Dorsolateral prefrontal cortex (tissue), 120 donors: ENCODE measurements at regions of chr2 and their contacts with region 1.

Region 1: GRCh38 chr2:204691911-204692510 is 146.7 kb downstream of the PARD3B start:
- DNase-seq: peak in 2 of 10 donors; percentile 7 to 25
- H3K4me3 ChIP-seq: no peak overlapping the region
- H3K27ac ChIP-seq: no peak overlapping the region
- H3K27me3 ChIP-seq: no peaks in the 10 kb centered on the region
- CTCF ChIP-seq: peak; percentile 25 to 84 (median 68)

Region 2: GRCh38 chr2:204145263-204145751 is 546.7 kb before region 1 on chr2:
- intact Hi-C with region 1: loop called in 1 of 2 experiments (anchors 10 kb)
- DNase-seq: peak; percentile 48 to 81 (median 64)
- H3K4me3 ChIP-seq: peak overlapping the region in 51 of 59 donors; percentile 3 to 59 (median 40)
- H3K27ac ChIP-seq: no peak overlapping the region
- H3K27me3 ChIP-seq: peaks cover 0 to 14% (median 0%) of the 10 kb centered on the region in 45 donors
- CTCF ChIP-seq: peak; percentile 72 to 98 (median 92)

Region 3: GRCh38 chr2:204251158-204251997 is 440.6 kb before region 1 on chr2:
- intact Hi-C with region 1: loop called in 1 of 2 experiments (anchors 10 kb)
- DNase-seq: no peak
- H3K4me3 ChIP-seq: no peak overlapping the region
- H3K27ac ChIP-seq: no peak overlapping the region
- H3K27me3 ChIP-seq: peaks cover 0 to 7% (median 0%) of the 10 kb centered on the region in 45 donors
- CTCF ChIP-seq: no peak

Region 4: DNA sequence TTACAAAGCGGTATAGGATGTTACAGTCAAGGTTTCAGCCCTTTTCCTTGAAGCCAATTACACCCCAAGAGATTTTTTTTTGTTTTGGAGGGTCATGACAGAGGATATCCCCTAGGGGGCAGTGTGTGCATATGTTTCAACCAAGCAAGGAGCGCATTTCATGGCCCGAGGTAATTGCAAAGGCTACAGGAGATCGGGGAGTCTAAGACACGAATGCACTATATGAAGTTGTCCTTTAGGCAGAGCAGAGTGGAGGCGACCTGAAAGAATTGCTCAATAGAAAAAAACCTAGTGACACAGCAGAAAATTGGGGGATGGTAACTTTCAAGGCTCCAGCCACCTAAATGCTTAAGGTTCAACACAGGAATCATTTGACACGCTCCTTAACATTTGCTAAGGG is 366.5 kb before region 1 on chr2:
- intact Hi-C with region 1: loop called (anchors 5 to 10 kb)
- DNase-seq: peak in 6 of 10 donors; percentile 18 to 64 (median 46)
- H3K4me3 ChIP-seq: peak overlapping the region in 1 of 59 donors; percentile 9
- H3K27ac ChIP-seq: no peak overlapping the region
- H3K27me3 ChIP-seq: no peaks in the 10 kb centered on the region
- CTCF ChIP-seq: peak; percentile 71 to 99 (median 93)

Region 5: GRCh38 chr2:204945376-204945775 is 253.4 kb after region 1 on chr2:
- intact Hi-C with region 1: no loop called
- DNase-seq: no peak
- H3K4me3 ChIP-seq: no peak overlapping the region
- H3K27ac ChIP-seq: no peak overlapping the region
- H3K27me3 ChIP-seq: no peaks in the 10 kb centered on the region
- CTCF ChIP-seq: no peak